ENCODE measurements at regions of chr17 and their contacts with region 1.

Region 1: GRCh38 chr17:69388822-69389442 is 25.6 kb upstream of the MAP2K6 start:
- DNase-seq: no peak
- ATAC-seq: no peak
- H3K4me3 Mint-ChIP-seq: no peak overlapping the region
- H3K27ac Mint-ChIP-seq: no peak overlapping the region
- H3K4me1 Mint-ChIP-seq: no peaks in the 10 kb centered on the region
- H3K27me3 Mint-ChIP-seq: peaks cover 24% of the 10 kb centered on the region

Region 2: GRCh38 chr17:69335058-69335457 is 53.9 kb before region 1 on chr17:
- CTCF ChIA-PET with region 1: interaction called, 21 read pairs
- DNase-seq: no peak
- ATAC-seq: peak; percentile 39
- H3K4me3 Mint-ChIP-seq: peak overlapping the region; percentile 58
- H3K27ac Mint-ChIP-seq: no peak overlapping the region
- H3K4me1 Mint-ChIP-seq: peaks cover 5% of the 10 kb centered on the region
- H3K27me3 Mint-ChIP-seq: peaks cover 26% of the 10 kb centered on the region

Region 3: GRCh38 chr17:69375229-69375628 is 13.7 kb before region 1 on chr17:
- CTCF ChIA-PET with region 1: no interaction called
- DNase-seq: peak; percentile 61
- ATAC-seq: no peak
- H3K4me3 Mint-ChIP-seq: no peak overlapping the region
- H3K27ac Mint-ChIP-seq: peak overlapping the region; percentile 69
- H3K4me1 Mint-ChIP-seq: peaks cover 11% of the 10 kb centered on the region
- H3K27me3 Mint-ChIP-seq: no peaks in the 10 kb centered on the region

Region 4: GRCh38 chr17:69414408-69415274 is 25.7 kb after region 1 on chr17 and contains the start of gene MAP2K6:
- CTCF ChIA-PET with region 1: interaction called, 16 read pairs
- DNase-seq: peak; percentile 93
- ATAC-seq: peak; percentile 98
- H3K4me3 Mint-ChIP-seq: no peak within 1 kb of the TSS
- H3K27ac Mint-ChIP-seq: no peak within 1 kb of the TSS
- H3K4me1 Mint-ChIP-seq: peaks cover 10% of the 10 kb centered on the region
- H3K27me3 Mint-ChIP-seq: no peaks in the 10 kb centered on the region
- total RNA-seq, gene MAP2K6: 6.3 to 8.8 TPM

Region 5: GRCh38 chr17:69525920-69526841 is 137.2 kb after region 1 on chr17:
- CTCF ChIA-PET with region 1: no interaction called
- DNase-seq: no peak
- ATAC-seq: no peak
- H3K4me3 Mint-ChIP-seq: no peak overlapping the region
- H3K27ac Mint-ChIP-seq: no peak overlapping the region
- H3K4me1 Mint-ChIP-seq: peaks cover 5% of the 10 kb centered on the region
- H3K27me3 Mint-ChIP-seq: no peaks in the 10 kb centered on the region